PC-9 (cell line): ENCODE measurements at regions of chr1 and their contacts with region 1.

Region 1: GRCh38 chr1:43367904-43368645 is at the start of gene ELOVL1:
- DNase-seq: peak; percentile 82 to 96
- H3K4me3 ChIP-seq: peak within 1 kb of the TSS; percentile 99
- H3K27ac ChIP-seq: peak within 1 kb of the TSS; percentile 89
- H3K4me1 ChIP-seq: peaks cover 69% of the 10 kb centered on the region
- H3K27me3 ChIP-seq: no peaks in the 10 kb centered on the region
- CTCF ChIP-seq: peak; percentile 33; the same call in 1 of the 2 replicates
- total RNA-seq, gene ELOVL1: 131 TPM in 2 replicates

Region 2: DNA sequence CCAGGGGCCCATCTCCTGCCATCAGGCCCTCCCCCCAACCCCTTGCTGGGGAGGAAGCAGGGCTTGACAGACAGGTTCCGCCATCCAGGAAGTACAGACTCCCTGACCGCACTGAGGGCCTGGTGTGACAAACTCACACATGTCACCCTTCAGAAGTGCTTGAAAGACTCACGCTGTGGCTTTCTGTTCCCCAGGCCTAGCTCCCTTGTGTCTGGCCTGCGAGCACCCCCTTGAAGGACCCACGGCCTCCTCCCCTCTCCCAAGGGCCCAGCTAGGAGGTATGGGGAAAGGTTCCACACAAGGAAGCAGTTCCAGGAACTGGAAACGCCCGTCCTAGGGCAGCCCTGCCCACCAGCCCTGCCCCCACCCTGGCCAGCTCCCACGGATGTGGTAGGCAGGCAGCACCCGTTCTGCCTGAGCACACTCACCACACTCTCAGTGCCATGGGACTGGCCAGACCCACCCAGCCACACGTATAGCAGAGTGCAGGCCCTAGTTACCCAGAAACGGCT is 436.1 kb before region 1 on chr1:
- CTCF ChIA-PET with region 1: no interaction called
- POLR2A ChIA-PET with region 1: no interaction called
- intact Hi-C with region 1: loop called (anchors 5 kb)
- DNase-seq: peak; percentile 86 to 92
- H3K4me3 ChIP-seq: no peak overlapping the region
- H3K27ac ChIP-seq: peak overlapping the region; percentile 69
- H3K4me1 ChIP-seq: peaks cover 60% of the 10 kb centered on the region
- H3K27me3 ChIP-seq: no peaks in the 10 kb centered on the region
- CTCF ChIP-seq: no peak

Region 3: DNA sequence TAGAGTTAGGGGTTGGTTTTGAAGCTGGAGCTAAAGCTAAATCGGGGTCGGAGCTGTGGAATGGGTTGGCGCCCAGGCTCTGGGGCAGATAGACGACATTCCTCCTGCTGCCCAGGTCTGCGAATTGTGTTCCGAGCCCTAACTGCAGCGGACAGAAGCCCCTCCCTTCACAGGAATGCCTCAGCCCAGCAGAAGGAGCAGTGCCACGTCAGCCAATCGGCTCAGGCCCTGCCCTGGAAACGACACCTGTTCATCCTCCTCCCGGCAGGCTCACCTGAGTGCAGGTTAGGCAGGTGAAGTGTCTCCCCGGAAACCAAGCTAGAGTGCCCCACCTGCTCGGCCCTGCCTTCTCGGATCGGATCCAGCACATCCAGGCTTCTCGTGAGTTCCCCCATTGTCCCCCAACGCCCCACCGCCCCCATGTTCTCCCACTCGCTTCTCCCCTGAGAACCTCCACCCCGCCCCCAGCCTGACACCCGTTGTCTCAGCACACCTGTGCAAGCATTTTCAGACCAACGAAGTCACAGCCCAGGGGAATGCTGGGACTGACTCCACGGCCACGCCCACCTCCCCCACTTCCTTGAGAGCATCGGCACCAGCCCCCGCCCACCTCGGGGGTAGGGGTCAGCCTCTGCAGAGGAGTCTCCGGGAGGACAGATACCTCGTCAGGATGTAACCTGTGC is 97.5 kb before region 1 on chr1:
- CTCF ChIA-PET with region 1: interaction called, 6 read pairs
- POLR2A ChIA-PET with region 1: interaction called, 3 read pairs
- intact Hi-C with region 1: loop called (anchors 2 kb)
- DNase-seq: peak; percentile 94 to 96
- H3K4me3 ChIP-seq: peak overlapping the region; percentile 59
- H3K27ac ChIP-seq: peak overlapping the region; percentile 81
- H3K4me1 ChIP-seq: peaks cover 25% of the 10 kb centered on the region
- H3K27me3 ChIP-seq: no peaks in the 10 kb centered on the region
- CTCF ChIP-seq: no peak

Region 4: GRCh38 chr1:43327549-43328292 is 40.4 kb before region 1 on chr1:
- CTCF ChIA-PET with region 1: no interaction called
- POLR2A ChIA-PET with region 1: no interaction called
- intact Hi-C with region 1: no loop called
- DNase-seq: no peak
- H3K4me3 ChIP-seq: no peak overlapping the region
- H3K27ac ChIP-seq: no peak overlapping the region
- H3K4me1 ChIP-seq: peaks cover 15% of the 10 kb centered on the region
- H3K27me3 ChIP-seq: no peaks in the 10 kb centered on the region
- CTCF ChIP-seq: no peak

Region 5: GRCh38 chr1:43348809-43349583 is 19.1 kb before region 1 on chr1:
- CTCF ChIA-PET with region 1: interaction called, 7 read pairs
- POLR2A ChIA-PET with region 1: interaction called, 3 read pairs
- intact Hi-C with region 1: loop called (anchors 1 kb)
- DNase-seq: peak; percentile 85 to 99
- H3K4me3 ChIP-seq: peak overlapping the region; percentile 66
- H3K27ac ChIP-seq: peak overlapping the region; percentile 94
- H3K4me1 ChIP-seq: peaks cover 48% of the 10 kb centered on the region
- H3K27me3 ChIP-seq: no peaks in the 10 kb centered on the region
- CTCF ChIP-seq: no peak

Region 6: GRCh38 chr1:43389326-43390313 is 21.5 kb after region 1 on chr1 and contains the starts of genes MED8 and SZT2:
- CTCF ChIA-PET with region 1: no interaction called
- POLR2A ChIA-PET with region 1: interaction called, 12 read pairs
- intact Hi-C with region 1: loop called (anchors 2 kb)
- DNase-seq: peak; percentile 92 to 97
- H3K4me3 ChIP-seq: peak within 1 kb of the TSS; percentile 80
- H3K27ac ChIP-seq: peak within 1 kb of the TSS; percentile 82
- H3K4me1 ChIP-seq: peaks cover 22% of the 10 kb centered on the region
- H3K27me3 ChIP-seq: no peaks in the 10 kb centered on the region
- CTCF ChIP-seq: no peak
- total RNA-seq, gene MED8: 54.8 and 56.0 TPM in 2 replicates
- total RNA-seq, gene SZT2: 71.6 and 76.1 TPM in 2 replicates

Region 7: GRCh38 chr1:43493661-43494450 is 125.8 kb after region 1 on chr1:
- CTCF ChIA-PET with region 1: no interaction called
- POLR2A ChIA-PET with region 1: no interaction called
- intact Hi-C with region 1: no loop called
- DNase-seq: no peak
- H3K4me3 ChIP-seq: no peak overlapping the region
- H3K27ac ChIP-seq: no peak overlapping the region
- H3K4me1 ChIP-seq: 0 out of 2 replicates have a peak, but pooled peaks cover 8% of the 10 kb centered on the region
- H3K27me3 ChIP-seq: no peaks in the 10 kb centered on the region
- CTCF ChIP-seq: no peak

Region 8: GRCh38 chr1:43678940-43679339 is 310.9 kb after region 1 on chr1:
- CTCF ChIA-PET with region 1: no interaction called
- POLR2A ChIA-PET with region 1: interaction called, 23 read pairs
- intact Hi-C with region 1: no loop called
- DNase-seq: no peak
- H3K4me3 ChIP-seq: no peak overlapping the region
- H3K27ac ChIP-seq: no peak overlapping the region
- H3K4me1 ChIP-seq: no peaks in the 10 kb centered on the region
- H3K27me3 ChIP-seq: no peaks in the 10 kb centered on the region
- CTCF ChIP-seq: no peak